MCF 10A (cell line): ENCODE measurements at regions of chr20 and their contacts with region 1.

Region 1: GRCh38 chr20:6178537-6178936 is 55.7 kb upstream of the FERMT1 start:
- DNase-seq: peak; percentile 50
- H3K4me3 Mint-ChIP-seq: no peak overlapping the region
- H3K27ac Mint-ChIP-seq: no peak overlapping the region
- H3K4me1 Mint-ChIP-seq: no peaks in the 10 kb centered on the region
- H3K27me3 Mint-ChIP-seq: no peaks in the 10 kb centered on the region
- CTCF ChIP-seq: peak; percentile 45

Region 2: GRCh38 chr20:6819605-6820004 is 641.1 kb after region 1 on chr20:
- CTCF ChIA-PET with region 1: interaction called, 7 read pairs
- POLR2A ChIA-PET with region 1: interaction called, 3 read pairs
- intact Hi-C with region 1: loop called (anchors 1 kb)
- DNase-seq: peak; percentile 42
- H3K4me3 Mint-ChIP-seq: no peak overlapping the region
- H3K27ac Mint-ChIP-seq: no peak overlapping the region
- H3K4me1 Mint-ChIP-seq: peaks cover 4% of the 10 kb centered on the region
- H3K27me3 Mint-ChIP-seq: no peaks in the 10 kb centered on the region
- CTCF ChIP-seq: peak; percentile 34

Region 3: DNA sequence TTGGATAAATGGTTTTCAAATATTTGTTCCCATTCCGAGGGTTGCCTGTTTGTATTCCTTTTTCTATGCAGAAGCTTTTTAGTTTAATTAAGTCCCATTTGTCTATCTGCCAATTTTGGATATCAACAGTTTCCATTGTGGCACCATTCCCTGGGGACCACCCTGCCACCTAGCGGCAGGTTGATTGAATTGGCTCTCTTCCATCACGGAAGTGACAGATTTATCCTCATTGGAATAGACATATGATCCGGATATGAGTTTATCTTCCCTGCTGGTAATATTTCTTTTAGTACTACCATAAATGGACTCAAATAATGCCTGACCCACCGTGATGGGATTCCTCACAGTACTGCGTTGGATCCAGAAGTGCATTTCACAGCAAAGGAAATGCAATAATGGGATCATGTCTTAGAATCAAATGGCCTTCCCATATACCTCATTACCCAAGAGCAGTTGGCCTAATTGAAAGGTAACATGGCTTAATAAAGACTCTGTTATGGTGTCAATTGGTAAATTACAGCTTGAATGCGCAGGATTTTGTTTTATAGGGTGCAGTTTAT is 916.0 kb after region 1 on chr20:
- CTCF ChIA-PET with region 1: no interaction called
- POLR2A ChIA-PET with region 1: no interaction called
- intact Hi-C with region 1: loop called (anchors 10 kb)
- DNase-seq: peak; percentile 65
- H3K4me3 Mint-ChIP-seq: no peak overlapping the region
- H3K27ac Mint-ChIP-seq: no peak overlapping the region
- H3K4me1 Mint-ChIP-seq: no peaks in the 10 kb centered on the region
- H3K27me3 Mint-ChIP-seq: no peaks in the 10 kb centered on the region
- CTCF ChIP-seq: peak; percentile 63

Region 4: DNA sequence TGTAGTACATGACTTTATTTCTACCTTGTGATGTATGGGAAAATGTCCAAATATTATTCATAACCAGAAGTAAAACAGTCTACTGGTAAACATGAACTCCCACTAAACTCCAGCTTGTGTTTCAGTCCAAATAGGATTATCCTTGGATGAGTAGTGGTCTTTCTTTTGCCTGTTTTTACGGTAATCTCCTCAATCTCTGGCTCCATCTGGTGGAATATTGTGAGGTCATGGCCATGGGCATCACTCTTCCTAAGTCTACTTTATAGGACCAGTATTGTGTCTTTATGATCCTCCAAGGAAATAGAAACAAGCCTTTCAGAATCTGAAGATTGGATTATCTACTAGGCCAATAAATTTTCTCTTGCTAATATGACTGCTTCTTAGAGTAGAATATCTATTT is 1094.0 kb after region 1 on chr20:
- CTCF ChIA-PET with region 1: no interaction called
- POLR2A ChIA-PET with region 1: interaction called, 5 read pairs
- intact Hi-C with region 1: loop called (anchors 1 kb)
- DNase-seq: peak; percentile 18
- H3K4me3 Mint-ChIP-seq: no peak overlapping the region
- H3K27ac Mint-ChIP-seq: no peak overlapping the region
- H3K4me1 Mint-ChIP-seq: no peaks in the 10 kb centered on the region
- H3K27me3 Mint-ChIP-seq: no peaks in the 10 kb centered on the region
- CTCF ChIP-seq: peak; percentile 35

Region 5: DNA sequence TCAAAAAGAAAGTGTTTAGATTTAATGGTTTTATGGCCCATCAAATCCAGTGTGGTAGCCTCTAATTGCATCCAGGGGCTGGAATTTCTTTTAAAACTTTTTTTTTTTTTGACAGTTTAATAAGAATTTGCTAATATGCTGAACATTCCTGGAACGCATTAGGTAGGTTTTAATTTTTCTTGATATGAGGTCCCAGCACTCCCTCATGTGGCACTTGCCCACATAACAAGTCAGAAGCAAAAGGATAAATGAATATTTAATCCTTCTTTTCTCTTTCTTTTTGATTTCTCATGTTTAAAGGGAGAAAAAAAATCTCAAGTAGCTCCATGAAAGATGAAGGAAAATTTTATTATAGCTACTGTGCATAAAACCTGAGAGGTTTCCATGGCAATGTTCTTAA is 1748.2 kb after region 1 on chr20:
- CTCF ChIA-PET with region 1: no interaction called
- POLR2A ChIA-PET with region 1: no interaction called
- intact Hi-C with region 1: loop called (anchors 5 kb)
- DNase-seq: peak; percentile 50
- H3K4me3 Mint-ChIP-seq: no peak overlapping the region
- H3K27ac Mint-ChIP-seq: no peak overlapping the region
- H3K4me1 Mint-ChIP-seq: peaks cover 9% of the 10 kb centered on the region
- H3K27me3 Mint-ChIP-seq: no peaks in the 10 kb centered on the region
- CTCF ChIP-seq: peak; percentile 59